CD4-positive, alpha-beta memory T cell (primary cell): ENCODE measurements at regions of chr10 and their contacts with region 1.

Region 1: GRCh38 chr10:62437696-62438095 is 63.5 kb downstream of the ZNF365 start:
- DNase-seq: peak; percentile 40 to 66 (median 62)
- H3K4me3 ChIP-seq: no peak overlapping the region
- H3K4me3 Mint-ChIP-seq: no peak overlapping the region
- H3K27ac ChIP-seq: no peak overlapping the region
- H3K27ac Mint-ChIP-seq: no peak overlapping the region
- H3K4me1 ChIP-seq: no peaks in the 10 kb centered on the region
- H3K4me1 Mint-ChIP-seq: peaks cover 0 to 5% (median 0%) of the 10 kb centered on the region in 4 donors
- H3K27me3 ChIP-seq: no peaks in the 10 kb centered on the region
- H3K27me3 Mint-ChIP-seq: no peaks in the 10 kb centered on the region

Region 2: GRCh38 chr10:62449755-62450154 is 12.1 kb after region 1 on chr10:
- CTCF ChIA-PET with region 1: interaction called, 29 read pairs
- POLR2A ChIA-PET with region 1: no interaction called
- intact Hi-C with region 1: no loop called
- DNase-seq: no peak
- H3K4me3 ChIP-seq: no peak overlapping the region
- H3K4me3 Mint-ChIP-seq: no peak overlapping the region
- H3K27ac ChIP-seq: no peak overlapping the region
- H3K27ac Mint-ChIP-seq: no peak overlapping the region
- H3K4me1 ChIP-seq: no peaks in the 10 kb centered on the region
- H3K4me1 Mint-ChIP-seq: no peaks in the 10 kb centered on the region
- H3K27me3 ChIP-seq: no peaks in the 10 kb centered on the region
- H3K27me3 Mint-ChIP-seq: peaks cover under 1 to 2% of the 10 kb centered on the region in 2 donors

Region 3: GRCh38 chr10:62594093-62594520 is 156.4 kb after region 1 on chr10:
- CTCF ChIA-PET with region 1: interaction called, 7 read pairs
- POLR2A ChIA-PET with region 1: no interaction called
- intact Hi-C with region 1: loop called (anchors 1 kb)
- DNase-seq: peak; percentile 38 to 59 (median 44)
- H3K4me3 ChIP-seq: no peak overlapping the region
- H3K4me3 Mint-ChIP-seq: peak overlapping the region in 1 of 8 donors; percentile 10
- H3K27ac ChIP-seq: no peak overlapping the region
- H3K27ac Mint-ChIP-seq: peak overlapping the region in 1 of 7 donors; percentile 9
- H3K4me1 ChIP-seq: no peaks in the 10 kb centered on the region
- H3K4me1 Mint-ChIP-seq: peaks cover 0 to 4% (median under 1%) of the 10 kb centered on the region in 4 donors
- H3K27me3 ChIP-seq: no peaks in the 10 kb centered on the region
- H3K27me3 Mint-ChIP-seq: peaks cover 3 to 5% of the 10 kb centered on the region in 2 donors

Region 4: DNA sequence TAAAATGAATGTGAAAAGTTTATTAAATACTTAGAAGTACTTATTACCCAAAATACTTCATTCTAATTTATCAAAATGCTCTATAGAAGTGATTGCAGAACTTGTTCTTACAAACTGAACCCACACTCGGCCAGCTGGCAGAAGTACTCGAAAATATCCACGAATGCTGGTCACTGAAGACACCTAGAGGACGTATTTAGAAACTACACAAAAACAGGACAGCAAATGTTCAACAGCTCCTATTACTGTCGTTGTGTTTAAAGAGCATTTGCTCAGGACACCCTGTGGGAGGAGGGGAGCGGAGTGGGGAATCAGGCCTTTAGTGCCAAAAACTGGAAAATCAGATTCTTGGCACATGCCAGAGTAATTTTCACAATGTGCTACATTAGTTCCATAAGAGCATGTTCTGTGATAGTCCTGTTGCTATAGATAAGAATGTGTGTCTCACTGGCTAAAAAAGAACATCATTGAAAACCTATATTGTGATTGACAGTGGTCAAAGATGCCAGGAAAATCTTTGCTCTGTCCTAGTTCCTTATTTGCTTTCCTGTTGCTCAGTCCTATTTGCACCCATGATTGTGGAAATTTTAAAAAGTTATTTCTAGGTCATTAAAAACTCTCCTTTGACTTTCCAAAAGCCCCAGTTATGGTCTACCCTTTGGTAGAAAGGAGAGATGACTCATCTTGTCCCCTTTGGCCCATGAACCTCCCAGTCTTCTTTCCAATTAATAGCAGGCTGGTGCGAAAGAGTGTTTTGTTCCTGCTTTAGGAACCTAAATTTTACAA is 646.4 kb after region 1 on chr10:
- CTCF ChIA-PET with region 1: interaction called, 24 read pairs
- POLR2A ChIA-PET with region 1: no interaction called
- intact Hi-C with region 1: loop called (anchors 1 kb)
- DNase-seq: peak; percentile 40 to 49 (median 48)
- H3K4me3 ChIP-seq: no peak overlapping the region
- H3K4me3 Mint-ChIP-seq: no peak overlapping the region
- H3K27ac ChIP-seq: no peak overlapping the region
- H3K27ac Mint-ChIP-seq: no peak overlapping the region
- H3K4me1 ChIP-seq: no peaks in the 10 kb centered on the region
- H3K4me1 Mint-ChIP-seq: peaks cover 0 to 1% (median 0%) of the 10 kb centered on the region in 4 donors
- H3K27me3 ChIP-seq: no peaks in the 10 kb centered on the region
- H3K27me3 Mint-ChIP-seq: peaks cover 8 to 12% of the 10 kb centered on the region in 2 donors